ENCODE measurements at regions of chr4 and their contacts with region 1.

Region 1: GRCh38 chr4:164779811-164780216 is 25.9 kb downstream of the SMIM31 start:
- DNase-seq: peak in 33 of 42 donors; percentile 8 to 70 (median 44)

Region 2: DNA sequence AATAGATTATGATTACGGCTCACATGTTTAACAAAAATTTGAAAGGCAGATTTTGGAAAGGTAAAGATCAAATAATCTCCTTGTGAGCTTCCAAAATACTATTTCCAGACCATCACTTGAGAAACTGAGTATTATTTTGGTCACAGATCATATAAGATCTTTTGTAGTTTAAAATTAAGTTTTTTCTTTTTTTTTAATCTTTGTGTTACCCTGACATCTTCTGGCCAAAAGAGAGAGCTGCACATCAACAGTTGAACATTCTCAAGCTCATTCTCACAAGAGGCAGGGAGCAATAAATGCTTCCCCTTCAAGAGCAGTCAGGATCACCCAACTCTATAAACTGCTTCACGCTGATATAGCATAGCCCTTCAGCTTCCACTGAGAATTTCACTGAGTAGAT is 317.0 kb after region 1 on chr4:
- intact Hi-C with region 1: loop called (anchors 10 kb)
- DNase-seq: peak in 2 of 42 donors; percentile 13 to 36

Measured in head of caudate nucleus (tissue), 42 donors.